ENCODE measurements at regions of chr6 and their contacts with region 1.

Region 1: GRCh38 chr6:67285763-67286495 is 1349.2 kb upstream of the ADGRB3 start:
- DNase-seq: no peak
- H3K4me3 ChIP-seq: no peak overlapping the region
- H3K27ac ChIP-seq: no peak overlapping the region
- H3K4me1 ChIP-seq: no peaks in the 10 kb centered on the region
- H3K27me3 ChIP-seq: no peaks in the 10 kb centered on the region
- CTCF ChIP-seq: no peak
- POLR2A ChIP-seq: no peak

Region 2: GRCh38 chr6:66751630-66752029 is 534.3 kb before region 1 on chr6:
- intact Hi-C with region 1: loop called (anchors 5 kb)
- DNase-seq: no peak
- H3K4me3 ChIP-seq: no peak overlapping the region
- H3K27ac ChIP-seq: no peak overlapping the region
- H3K4me1 ChIP-seq: no peaks in the 10 kb centered on the region
- H3K27me3 ChIP-seq: no peaks in the 10 kb centered on the region
- CTCF ChIP-seq: no peak
- POLR2A ChIP-seq: no peak

Measured in breast epithelium (tissue), 4 donors.